ENCODE measurements at regions of chr13 and their contacts with region 1.

Region 1: GRCh38 chr13:104034891-104035290 is 968.7 kb upstream of the SLC10A2 start:
- DNase-seq: no peak

Region 2: GRCh38 chr13:103625194-103625593 is 409.7 kb before region 1 on chr13:
- intact Hi-C with region 1: loop called in 1 of 2 experiments (anchors 5 kb)
- DNase-seq: no peak

Region 3: GRCh38 chr13:104071806-104072205 is 36.9 kb after region 1 on chr13:
- intact Hi-C with region 1: no loop called
- DNase-seq: no peak